ENCODE measurements at regions of chr2 and their contacts with region 1.

Region 1: GRCh38 chr2:156077041-156077735 is 255.3 kb downstream of the NR4A2 start:
- DNase-seq: no peak
- ATAC-seq: no peak
- H3K4me3 ChIP-seq: no peak overlapping the region
- H3K27ac ChIP-seq: no peak overlapping the region
- H3K4me1 ChIP-seq: no peaks in the 10 kb centered on the region
- H3K27me3 ChIP-seq: no peaks in the 10 kb centered on the region
- CTCF ChIP-seq: no peak
- EP300 ChIP-seq: no peak
- POLR2A ChIP-seq: no peak
- RAD21 ChIP-seq: no peak

Region 2: GRCh38 chr2:156021146-156022035 is 55.8 kb before region 1 on chr2:
- CTCF ChIA-PET with region 1: no interaction called
- POLR2A ChIA-PET with region 1: no interaction called
- in situ Hi-C with region 1: no loop called
- intact Hi-C with region 1: loop called (anchors 2 kb)
- DNase-seq: no peak
- ATAC-seq: no peak
- H3K4me3 ChIP-seq: no peak overlapping the region
- H3K27ac ChIP-seq: no peak overlapping the region
- H3K4me1 ChIP-seq: no peaks in the 10 kb centered on the region
- H3K27me3 ChIP-seq: no peaks in the 10 kb centered on the region
- CTCF ChIP-seq: no peak
- EP300 ChIP-seq: no peak
- POLR2A ChIP-seq: no peak
- RAD21 ChIP-seq: no peak

Region 3: DNA sequence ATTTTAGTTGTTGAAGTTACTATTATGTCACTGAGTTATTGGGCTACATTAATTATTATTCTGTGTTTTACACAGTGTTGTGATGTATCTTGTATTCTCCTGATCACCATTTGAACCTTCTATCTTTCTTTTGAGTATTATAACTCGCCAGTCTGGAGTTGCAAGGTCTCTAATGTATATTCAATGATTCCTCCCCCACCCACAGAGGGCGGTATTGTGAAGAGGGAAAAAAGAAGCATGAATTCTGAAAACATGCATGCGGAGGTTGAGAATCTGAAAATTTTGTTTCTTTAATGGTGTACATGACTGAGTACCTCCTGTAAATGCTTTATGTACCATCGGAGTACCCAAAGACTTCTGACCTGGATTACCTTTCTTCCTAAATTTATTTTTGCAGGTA is 11.3 kb before region 1 on chr2:
- CTCF ChIA-PET with region 1: no interaction called
- POLR2A ChIA-PET with region 1: no interaction called
- in situ Hi-C with region 1: no loop called
- intact Hi-C with region 1: loop called (anchors 2 kb)
- DNase-seq: peak; percentile 18
- ATAC-seq: no peak
- H3K4me3 ChIP-seq: no peak overlapping the region
- H3K27ac ChIP-seq: no peak overlapping the region
- H3K4me1 ChIP-seq: no peaks in the 10 kb centered on the region
- H3K27me3 ChIP-seq: no peaks in the 10 kb centered on the region
- CTCF ChIP-seq: no peak
- EP300 ChIP-seq: no peak
- POLR2A ChIP-seq: no peak
- RAD21 ChIP-seq: no peak